ENCODE measurements at regions of chr7 and their contacts with region 1.

Region 1: DNA sequence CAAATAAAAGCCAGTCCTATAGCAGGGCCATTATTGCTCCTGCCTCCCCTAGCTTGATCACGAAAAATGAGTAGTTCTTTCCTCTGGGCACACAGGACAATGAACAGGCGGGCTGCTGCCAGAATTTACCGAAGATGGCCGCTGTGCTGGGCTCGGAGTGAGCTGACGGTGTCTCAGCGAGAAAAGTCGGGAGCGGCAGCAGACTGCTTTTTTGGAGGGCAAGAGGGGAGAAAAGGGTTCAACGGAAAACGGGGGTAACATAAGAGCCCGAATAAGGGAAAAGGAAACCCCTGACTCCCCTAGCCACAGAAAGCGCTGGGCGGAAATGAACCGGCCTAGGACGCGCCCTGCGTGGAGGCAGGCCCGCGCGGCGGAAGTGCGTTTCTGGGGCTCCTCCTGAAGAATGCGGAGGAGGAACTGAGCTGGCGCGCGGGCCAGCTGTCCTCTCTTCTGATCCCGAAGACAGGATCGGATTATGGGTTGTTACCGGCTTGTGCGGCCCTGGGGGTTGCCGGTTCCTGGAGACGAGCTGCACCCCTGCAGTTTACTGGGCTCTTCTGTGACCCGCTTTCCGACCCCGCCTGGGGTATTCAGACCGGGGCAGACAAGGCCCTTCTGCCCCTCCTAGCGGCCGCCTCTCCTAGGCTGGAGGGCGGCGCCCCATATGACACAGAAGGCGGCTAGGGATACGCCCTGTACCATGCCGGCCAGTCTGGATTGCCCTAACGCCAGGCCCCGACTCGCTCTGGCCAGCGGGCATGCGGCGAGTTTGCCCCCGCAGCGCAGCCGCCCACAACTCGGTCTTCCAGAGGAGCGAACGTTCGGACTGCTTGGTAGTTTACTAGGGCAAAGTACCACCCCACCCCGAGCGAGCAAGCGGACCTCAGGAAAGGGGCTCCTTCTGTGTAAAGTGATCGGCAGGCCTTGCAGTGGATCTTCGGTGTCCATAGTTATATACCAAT is 30.1 kb upstream of the KMT2E start:
- DNase-seq: peak; percentile 90
- ATAC-seq: peak; percentile 89
- H3K4me3 Mint-ChIP-seq: peak overlapping the region; percentile 86
- H3K27ac Mint-ChIP-seq: peak overlapping the region; percentile 100
- H3K4me1 Mint-ChIP-seq: peaks cover 70% of the 10 kb centered on the region
- H3K27me3 Mint-ChIP-seq: no peaks in the 10 kb centered on the region
- CTCF ChIP-seq: peak; percentile 65

Region 2: GRCh38 chr7:104873346-104873849 is 110.5 kb before region 1 on chr7:
- CTCF ChIA-PET with region 1: no interaction called
- POLR2A ChIA-PET with region 1: no interaction called
- intact Hi-C with region 1: no loop called
- DNase-seq: no peak
- ATAC-seq: no peak
- H3K4me3 Mint-ChIP-seq: no peak overlapping the region
- H3K27ac Mint-ChIP-seq: no peak overlapping the region
- H3K4me1 Mint-ChIP-seq: peaks cover 2% of the 10 kb centered on the region
- H3K27me3 Mint-ChIP-seq: peaks cover 1% of the 10 kb centered on the region
- CTCF ChIP-seq: no peak

Region 3: DNA sequence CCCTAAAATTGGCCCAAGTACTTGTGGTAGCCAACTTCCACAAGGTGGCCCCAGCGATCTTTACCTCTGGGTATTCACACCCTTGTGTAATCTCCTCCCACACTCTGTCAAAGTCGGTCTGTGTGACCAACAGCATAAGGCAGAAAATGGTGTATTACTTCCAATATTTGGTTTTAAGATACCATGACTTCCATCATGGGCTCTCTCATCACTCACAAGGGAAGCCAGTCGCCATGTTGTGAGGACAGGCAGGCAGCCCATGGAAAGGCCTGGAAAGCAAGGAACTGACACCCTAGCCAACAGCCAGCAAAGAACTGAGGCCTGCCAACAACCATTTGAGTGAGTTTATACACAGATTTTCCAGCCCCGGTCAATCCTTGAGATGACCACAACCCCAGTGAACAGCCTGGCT is 60.8 kb before region 1 on chr7:
- CTCF ChIA-PET with region 1: interaction called, 56 read pairs
- POLR2A ChIA-PET with region 1: no interaction called
- intact Hi-C with region 1: loop called (anchors 2 kb)
- DNase-seq: peak; percentile 91
- ATAC-seq: peak; percentile 99
- H3K4me3 Mint-ChIP-seq: no peak overlapping the region
- H3K27ac Mint-ChIP-seq: peak overlapping the region; percentile 52
- H3K4me1 Mint-ChIP-seq: peaks cover 4% of the 10 kb centered on the region
- H3K27me3 Mint-ChIP-seq: no peaks in the 10 kb centered on the region
- CTCF ChIP-seq: peak; percentile 77

Region 4: GRCh38 chr7:104943502-104944343 is 40.1 kb before region 1 on chr7:
- CTCF ChIA-PET with region 1: interaction called, 51 read pairs
- POLR2A ChIA-PET with region 1: interaction called, 17 read pairs
- intact Hi-C with region 1: loop called (anchors 5 kb)
- DNase-seq: peak; percentile 93
- ATAC-seq: peak; percentile 57
- H3K4me3 Mint-ChIP-seq: peak overlapping the region; percentile 83
- H3K27ac Mint-ChIP-seq: peak overlapping the region; percentile 100
- H3K4me1 Mint-ChIP-seq: peaks cover 64% of the 10 kb centered on the region
- H3K27me3 Mint-ChIP-seq: no peaks in the 10 kb centered on the region
- CTCF ChIP-seq: no peak

Region 5: GRCh38 chr7:104998040-104998752 is 14.3 kb after region 1 on chr7:
- CTCF ChIA-PET with region 1: interaction called, 16 read pairs
- POLR2A ChIA-PET with region 1: interaction called, 11 read pairs
- intact Hi-C with region 1: no loop called
- DNase-seq: no peak
- ATAC-seq: no peak
- H3K4me3 Mint-ChIP-seq: no peak overlapping the region
- H3K27ac Mint-ChIP-seq: peak overlapping the region; percentile 78
- H3K4me1 Mint-ChIP-seq: peaks cover 88% of the 10 kb centered on the region
- H3K27me3 Mint-ChIP-seq: no peaks in the 10 kb centered on the region
- CTCF ChIP-seq: no peak

Region 6: GRCh38 chr7:105013221-105013815 is 29.5 kb after region 1 on chr7:
- CTCF ChIA-PET with region 1: interaction called, 210 read pairs
- POLR2A ChIA-PET with region 1: interaction called, 186 read pairs
- intact Hi-C with region 1: loop called (anchors 1 kb)
- DNase-seq: peak; percentile 95
- ATAC-seq: peak; percentile 58
- H3K4me3 Mint-ChIP-seq: peak overlapping the region; percentile 100
- H3K27ac Mint-ChIP-seq: peak overlapping the region; percentile 100
- H3K4me1 Mint-ChIP-seq: peaks cover 14% of the 10 kb centered on the region
- H3K27me3 Mint-ChIP-seq: no peaks in the 10 kb centered on the region
- CTCF ChIP-seq: peak; percentile 38

Region 7: DNA sequence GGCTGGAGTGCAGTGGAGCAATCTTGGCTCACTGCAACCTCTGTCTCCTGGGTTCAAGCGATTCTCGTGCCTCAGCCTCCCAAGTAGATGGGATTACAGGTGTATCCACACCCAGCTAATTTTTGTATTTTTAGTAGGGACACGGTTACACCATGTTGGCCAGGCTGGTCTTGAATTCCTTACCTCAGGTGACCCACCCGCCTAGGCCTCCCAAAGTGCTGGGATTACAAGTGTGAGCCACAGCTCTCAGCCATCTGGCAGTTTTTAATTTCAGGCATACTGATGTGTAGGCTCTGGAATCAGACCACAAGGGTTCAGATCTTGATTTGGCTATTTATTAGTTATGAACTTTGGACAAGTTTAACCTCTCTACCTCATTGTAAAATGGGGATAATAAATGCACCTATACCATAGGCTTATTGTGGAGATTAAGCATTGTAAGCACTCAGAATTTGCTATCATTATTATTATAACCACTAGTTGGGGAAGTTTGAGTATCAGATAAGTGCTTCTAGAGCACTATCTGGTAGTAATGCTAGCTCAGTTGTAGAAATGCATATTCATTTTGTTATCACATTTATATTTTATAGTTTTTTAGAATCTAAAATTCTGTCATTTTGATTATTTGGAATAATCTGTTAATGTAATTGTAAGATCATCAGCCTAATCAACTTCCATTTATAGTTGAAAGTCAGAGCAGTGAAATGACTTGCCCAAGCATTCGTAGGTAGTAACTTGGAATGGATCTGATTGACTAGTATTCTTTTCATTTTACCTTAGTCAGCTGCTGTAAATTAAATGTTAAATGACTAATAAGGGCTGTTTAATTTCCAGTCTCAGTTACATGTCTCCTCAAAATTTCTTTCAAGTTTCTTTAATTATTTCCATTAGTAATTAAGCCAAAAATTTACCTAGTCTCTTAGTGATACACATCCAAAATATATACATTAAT is 52.6 kb after region 1 on chr7:
- CTCF ChIA-PET with region 1: interaction called, 23 read pairs
- POLR2A ChIA-PET with region 1: no interaction called
- intact Hi-C with region 1: loop called (anchors 5 kb)
- DNase-seq: no peak
- ATAC-seq: no peak
- H3K4me3 Mint-ChIP-seq: no peak overlapping the region
- H3K27ac Mint-ChIP-seq: peak overlapping the region; percentile 4
- H3K4me1 Mint-ChIP-seq: peaks cover 61% of the 10 kb centered on the region
- H3K27me3 Mint-ChIP-seq: no peaks in the 10 kb centered on the region
- CTCF ChIP-seq: no peak

Region 8: GRCh38 chr7:105068886-105069285 is 85.0 kb after region 1 on chr7:
- CTCF ChIA-PET with region 1: interaction called, 10 read pairs
- POLR2A ChIA-PET with region 1: no interaction called
- intact Hi-C with region 1: no loop called
- DNase-seq: no peak
- ATAC-seq: no peak
- H3K4me3 Mint-ChIP-seq: no peak overlapping the region
- H3K27ac Mint-ChIP-seq: peak overlapping the region; percentile 42
- H3K4me1 Mint-ChIP-seq: peaks cover 22% of the 10 kb centered on the region
- H3K27me3 Mint-ChIP-seq: no peaks in the 10 kb centered on the region
- CTCF ChIP-seq: no peak

Region 9: GRCh38 chr7:106056513-106057203 is 1072.8 kb after region 1 on chr7:
- CTCF ChIA-PET with region 1: no interaction called
- POLR2A ChIA-PET with region 1: no interaction called
- intact Hi-C with region 1: no loop called
- DNase-seq: peak; percentile 83
- ATAC-seq: peak; percentile 97
- H3K4me3 Mint-ChIP-seq: no peak overlapping the region
- H3K27ac Mint-ChIP-seq: peak overlapping the region; percentile 34
- H3K4me1 Mint-ChIP-seq: peaks cover 25% of the 10 kb centered on the region
- H3K27me3 Mint-ChIP-seq: no peaks in the 10 kb centered on the region
- CTCF ChIP-seq: peak; percentile 87